Activated CD4-positive, alpha-beta memory T cell treated with anti-CD3 and anti-CD28 coated beads for 36 hours (primary cell): ENCODE measurements at regions of chr5 and their contacts with region 1.

Region 1: GRCh38 chr5:68287976-68288706 is 72.6 kb downstream of the PIK3R1 start:
- DNase-seq: peak; percentile 63
- H3K4me3 Mint-ChIP-seq: peak overlapping the region; percentile 84
- H3K27ac Mint-ChIP-seq: peak overlapping the region; percentile 88
- H3K4me1 Mint-ChIP-seq: peaks cover 86% of the 10 kb centered on the region
- H3K27me3 Mint-ChIP-seq: no peaks in the 10 kb centered on the region

Region 2: GRCh38 chr5:68252673-68253623 is 35.2 kb before region 1 on chr5:
- CTCF ChIA-PET with region 1: interaction called, 14 read pairs
- POLR2A ChIA-PET with region 1: no interaction called
- intact Hi-C with region 1: no loop called
- DNase-seq: peak; percentile 59
- H3K4me3 Mint-ChIP-seq: no peak overlapping the region
- H3K27ac Mint-ChIP-seq: no peak overlapping the region
- H3K4me1 Mint-ChIP-seq: peaks cover 90% of the 10 kb centered on the region
- H3K27me3 Mint-ChIP-seq: no peaks in the 10 kb centered on the region

Region 3: DNA sequence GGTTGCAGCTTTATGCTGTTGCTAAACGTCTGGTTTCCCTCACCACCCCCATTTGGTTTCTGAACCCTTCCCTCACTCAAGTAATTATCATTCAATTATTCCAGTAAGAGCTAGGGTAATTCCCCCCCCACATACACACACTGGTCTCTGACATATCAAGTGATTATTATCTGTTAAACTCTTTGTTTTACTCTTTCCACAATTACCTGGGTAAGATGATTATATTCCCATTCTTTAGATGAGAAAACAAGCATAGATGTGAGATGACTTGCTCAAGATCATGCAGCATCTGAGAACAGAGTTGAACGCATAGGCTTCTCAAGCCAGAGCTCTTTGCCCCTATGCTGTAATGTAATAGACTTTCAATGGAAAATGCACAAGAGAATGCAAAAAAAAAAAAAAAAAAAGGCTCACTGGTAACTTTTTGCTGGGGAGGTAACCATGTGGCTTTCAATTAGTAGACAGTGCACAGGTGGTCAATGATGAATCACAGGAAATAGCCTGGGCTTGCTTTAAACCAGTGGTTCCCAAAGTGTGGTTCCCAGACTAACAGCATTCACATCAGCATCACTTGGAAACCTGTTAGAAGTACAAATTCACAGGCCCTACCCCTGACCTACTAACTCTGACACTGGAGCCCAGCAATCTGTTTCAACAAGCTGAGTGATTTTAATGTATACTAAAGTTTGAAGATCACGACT is 15.0 kb after region 1 on chr5:
- CTCF ChIA-PET with region 1: interaction called, 52 read pairs
- POLR2A ChIA-PET with region 1: no interaction called
- intact Hi-C with region 1: loop called (anchors 1 kb)
- DNase-seq: no peak
- H3K4me3 Mint-ChIP-seq: no peak overlapping the region
- H3K27ac Mint-ChIP-seq: peak overlapping the region; percentile 57
- H3K4me1 Mint-ChIP-seq: peaks cover 49% of the 10 kb centered on the region
- H3K27me3 Mint-ChIP-seq: no peaks in the 10 kb centered on the region

Region 4: GRCh38 chr5:68424799-68425537 is 136.8 kb after region 1 on chr5:
- CTCF ChIA-PET with region 1: interaction called, 15 read pairs
- POLR2A ChIA-PET with region 1: no interaction called
- intact Hi-C with region 1: no loop called
- DNase-seq: peak; percentile 35
- H3K4me3 Mint-ChIP-seq: no peak overlapping the region
- H3K27ac Mint-ChIP-seq: no peak overlapping the region
- H3K4me1 Mint-ChIP-seq: peaks cover 42% of the 10 kb centered on the region
- H3K27me3 Mint-ChIP-seq: no peaks in the 10 kb centered on the region

Region 5: GRCh38 chr5:68661237-68661636 is 373.1 kb after region 1 on chr5:
- CTCF ChIA-PET with region 1: interaction called, 5 read pairs
- POLR2A ChIA-PET with region 1: no interaction called
- intact Hi-C with region 1: loop called (anchors 2 kb)
- DNase-seq: peak; percentile 35
- H3K4me3 Mint-ChIP-seq: no peak overlapping the region
- H3K27ac Mint-ChIP-seq: no peak overlapping the region
- H3K4me1 Mint-ChIP-seq: no peaks in the 10 kb centered on the region
- H3K27me3 Mint-ChIP-seq: no peaks in the 10 kb centered on the region

Region 6: GRCh38 chr5:68962757-68963484 is 674.8 kb after region 1 on chr5:
- CTCF ChIA-PET with region 1: no interaction called
- POLR2A ChIA-PET with region 1: no interaction called
- intact Hi-C with region 1: loop called (anchors 2 kb)
- DNase-seq: peak; percentile 31
- H3K4me3 Mint-ChIP-seq: no peak overlapping the region
- H3K27ac Mint-ChIP-seq: no peak overlapping the region
- H3K4me1 Mint-ChIP-seq: peaks cover 2% of the 10 kb centered on the region
- H3K27me3 Mint-ChIP-seq: no peaks in the 10 kb centered on the region